ENCODE measurements at regions of chr20 and their contacts with region 1.

Region 1: GRCh38 chr20:40962730-40963504 is 65.7 kb upstream of the TOP1 start:
- DNase-seq: peak; percentile 84
- ATAC-seq: peak; percentile 85

Region 2: DNA sequence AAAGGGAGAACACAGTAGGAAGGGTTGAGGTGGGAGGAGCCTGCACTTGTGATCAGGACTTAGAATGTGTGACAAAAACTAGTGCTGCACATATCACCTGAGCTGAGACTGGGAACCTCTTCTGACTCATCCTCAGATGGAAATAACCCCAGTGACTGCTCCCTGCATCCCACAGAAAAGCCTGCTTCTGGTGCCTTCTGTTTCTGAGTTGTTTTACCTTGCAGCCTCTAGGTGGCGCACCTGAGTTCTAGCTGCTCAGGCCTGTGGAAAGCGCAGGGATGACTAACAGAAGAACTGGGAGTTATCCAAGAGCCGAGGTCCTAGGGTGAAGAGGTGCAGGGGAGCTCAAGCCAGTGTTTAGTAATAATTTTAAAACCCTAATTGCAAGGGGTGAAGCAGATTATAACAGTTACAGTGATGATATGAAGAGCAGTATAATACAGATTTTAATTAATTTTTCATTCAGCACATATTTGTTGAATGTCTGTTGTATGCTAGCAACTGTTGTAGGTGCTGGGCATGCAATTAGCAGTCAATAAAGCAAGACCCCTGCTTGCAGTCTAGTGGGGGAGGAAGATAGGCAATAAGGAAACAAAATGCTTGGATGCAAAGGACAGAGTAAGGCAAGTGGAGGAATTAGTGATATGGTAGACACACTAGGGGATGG is 1698.3 kb before region 1 on chr20:
- intact Hi-C with region 1: loop called (anchors 5 kb)
- DNase-seq: no peak
- ATAC-seq: peak; percentile 67

Region 3: GRCh38 chr20:40741507-40742106 is 221.3 kb before region 1 on chr20:
- intact Hi-C with region 1: loop called (anchors 5 kb)
- DNase-seq: no peak
- ATAC-seq: no peak

Region 4: DNA sequence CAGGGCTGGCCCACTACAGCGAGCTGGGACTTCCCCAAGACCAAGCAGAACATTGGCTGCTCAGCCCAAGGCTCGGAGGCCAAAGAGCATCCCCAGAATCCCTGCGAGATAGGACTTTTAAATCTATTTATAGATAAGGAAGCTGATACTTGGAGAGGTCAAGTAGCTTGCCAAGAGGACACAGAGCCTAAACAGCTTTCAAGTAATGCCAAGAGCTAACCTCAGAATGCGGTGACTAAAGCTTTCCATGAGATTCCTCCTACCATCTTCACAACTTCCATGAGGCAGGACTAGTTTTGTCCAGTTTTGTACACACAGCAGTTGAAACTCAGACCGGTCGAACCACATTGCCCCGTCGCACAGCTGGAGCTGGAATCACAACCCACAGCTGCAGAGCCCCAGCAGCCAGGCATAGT is 102.4 kb before region 1 on chr20:
- intact Hi-C with region 1: no loop called
- DNase-seq: no peak
- ATAC-seq: no peak

Region 5: DNA sequence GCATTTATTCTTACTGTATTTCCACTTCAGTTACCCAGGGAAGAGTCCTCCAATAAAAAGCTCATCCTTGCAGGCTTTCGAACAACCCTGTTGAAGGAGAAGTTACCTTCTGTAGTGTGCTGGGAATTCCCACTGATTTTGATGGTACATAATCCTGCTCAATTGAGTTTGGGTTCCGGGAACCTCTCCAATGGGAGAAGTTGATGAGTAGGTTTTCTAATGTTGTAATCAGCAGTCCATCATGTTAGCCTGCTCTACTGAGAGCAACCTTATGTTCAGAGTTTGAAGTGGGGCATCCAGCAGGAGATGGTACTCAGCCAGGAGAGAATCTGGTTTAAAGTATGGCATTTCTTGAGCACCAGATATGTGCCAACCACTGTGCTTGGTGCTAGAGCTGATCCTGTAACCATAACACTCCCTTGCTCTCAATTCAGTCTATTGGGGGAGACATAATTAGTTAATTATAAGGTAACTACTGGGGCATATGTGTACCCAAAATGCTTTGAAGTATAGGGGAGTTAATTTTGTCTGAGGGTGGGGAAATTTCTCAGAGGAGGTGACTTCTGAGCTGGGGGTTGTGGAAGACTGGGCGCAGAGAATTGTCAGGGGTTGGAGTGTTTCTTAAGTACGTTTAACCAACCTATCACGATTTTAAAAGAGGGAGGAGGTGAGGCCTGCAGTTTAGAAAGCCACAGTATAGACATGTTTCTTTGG is 67.8 kb after region 1 on chr20:
- intact Hi-C with region 1: no loop called
- DNase-seq: no peak
- ATAC-seq: no peak

Region 6: GRCh38 chr20:41095110-41095969 is 132.4 kb after region 1 on chr20:
- intact Hi-C with region 1: loop called (anchors 1 kb)
- DNase-seq: peak; percentile 76
- ATAC-seq: peak; percentile 56

Measured in Right ventricle myocardium inferior (tissue), 1 donor.